CD4-positive, alpha-beta T cell (primary cell): ENCODE measurements at regions of chr3 and their contacts with region 1.

Region 1: GRCh38 chr3:196251918-196252317 is 35.6 kb downstream of the SLC51A start:
- DNase-seq: peak in 1 of 14 experiments; percentile 17
- ATAC-seq: no peak
- H3K4me3 ChIP-seq: no peak overlapping the region
- H3K4me3 Mint-ChIP-seq: no peak overlapping the region
- H3K27ac ChIP-seq: no peak overlapping the region
- H3K27ac Mint-ChIP-seq: no peak overlapping the region
- H3K4me1 ChIP-seq: peaks cover 7% of the 10 kb centered on the region
- H3K4me1 Mint-ChIP-seq: peaks cover 5% of the 10 kb centered on the region
- H3K27me3 ChIP-seq: no peaks in the 10 kb centered on the region
- H3K27me3 Mint-ChIP-seq: no peaks in the 10 kb centered on the region
- CTCF ChIP-seq: no peak

Region 2: GRCh38 chr3:196518966-196519717 is 267.2 kb after region 1 on chr3:
- CTCF ChIA-PET with region 1: interaction called, 8 read pairs
- POLR2A ChIA-PET with region 1: interaction called, 3 read pairs
- intact Hi-C with region 1: loop called (anchors 1 kb)
- DNase-seq: peak; percentile 23 to 77 (median 45)
- ATAC-seq: no peak
- H3K4me3 ChIP-seq: no peak overlapping the region
- H3K4me3 Mint-ChIP-seq: no peak overlapping the region
- H3K27ac ChIP-seq: no peak overlapping the region
- H3K27ac Mint-ChIP-seq: no peak overlapping the region
- H3K4me1 ChIP-seq: no peaks in the 10 kb centered on the region
- H3K4me1 Mint-ChIP-seq: no peaks in the 10 kb centered on the region
- H3K27me3 ChIP-seq: no peaks in the 10 kb centered on the region
- H3K27me3 Mint-ChIP-seq: peaks cover 4% of the 10 kb centered on the region
- CTCF ChIP-seq: peak; percentile 50